ENCODE measurements at regions of chr4 and their contacts with region 1.

Region 1: GRCh38 chr4:26325191-26325590 is 4.4 kb downstream of the RBPJ start:
- DNase-seq: peak in 5 of 9 experiments; percentile 7 to 71 (median 22)
- ATAC-seq: peak; percentile 35
- H3K4me3 ChIP-seq: no peak overlapping the region
- H3K4me3 Mint-ChIP-seq: no peak overlapping the region
- H3K27ac ChIP-seq: no peak overlapping the region
- H3K27ac Mint-ChIP-seq: no peak overlapping the region
- H3K4me1 ChIP-seq: peaks cover 14% of the 10 kb centered on the region
- H3K4me1 Mint-ChIP-seq: peaks cover 52% of the 10 kb centered on the region
- H3K27me3 ChIP-seq: no peaks in the 10 kb centered on the region
- H3K27me3 Mint-ChIP-seq: no peaks in the 10 kb centered on the region
- CTCF ChIP-seq: peak; percentile 53

Region 2: DNA sequence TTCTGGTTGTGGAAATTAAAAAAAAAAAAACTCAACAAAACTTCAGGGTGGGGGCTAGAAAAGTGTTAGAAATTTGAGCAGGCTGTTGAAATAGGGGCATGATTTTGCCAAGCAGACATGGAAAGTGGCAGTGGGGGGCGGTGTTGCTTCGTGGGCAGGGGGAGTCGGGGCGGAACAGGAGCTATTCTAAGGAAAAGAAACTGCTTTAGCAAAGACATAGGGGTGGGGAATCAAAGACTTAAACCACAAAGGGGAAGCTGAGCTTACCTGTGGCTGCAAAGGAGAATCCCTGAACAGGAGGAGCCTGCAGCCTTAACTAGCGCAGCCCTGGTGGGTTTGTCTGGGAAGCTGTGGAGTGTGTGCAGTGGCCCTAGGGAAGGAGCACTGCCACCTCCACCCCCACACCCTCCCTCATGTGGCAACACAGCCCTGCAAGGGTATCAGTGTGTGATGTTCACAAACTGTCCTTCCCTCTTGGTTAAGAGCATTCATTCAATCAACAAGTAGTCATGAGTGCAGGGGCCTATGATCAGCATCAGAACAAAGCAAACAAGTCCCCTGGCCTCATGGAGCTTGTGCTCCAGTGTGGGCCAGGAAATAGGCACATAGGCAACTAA is 482.9 kb before region 1 on chr4:
- CTCF ChIA-PET with region 1: interaction called, 7 read pairs
- POLR2A ChIA-PET with region 1: no interaction called
- intact Hi-C with region 1: loop called (anchors 5 kb)
- DNase-seq: peak in 8 of 9 experiments; percentile 29 to 68 (median 60)
- ATAC-seq: peak; percentile 83
- H3K4me3 ChIP-seq: no peak overlapping the region
- H3K4me3 Mint-ChIP-seq: no peak overlapping the region
- H3K27ac ChIP-seq: no peak overlapping the region
- H3K27ac Mint-ChIP-seq: no peak overlapping the region
- H3K4me1 ChIP-seq: peaks cover 20% of the 10 kb centered on the region
- H3K4me1 Mint-ChIP-seq: peaks cover 54% of the 10 kb centered on the region
- H3K27me3 ChIP-seq: no peaks in the 10 kb centered on the region
- H3K27me3 Mint-ChIP-seq: no peaks in the 10 kb centered on the region
- CTCF ChIP-seq: peak; percentile 24

Region 3: GRCh38 chr4:25993395-25994185 is 331.6 kb before region 1 on chr4:
- CTCF ChIA-PET with region 1: interaction called, 13 read pairs
- POLR2A ChIA-PET with region 1: no interaction called
- intact Hi-C with region 1: loop called (anchors 1 to 5 kb)
- DNase-seq: peak in 2 of 9 experiments; percentile 8 to 20
- ATAC-seq: no peak
- H3K4me3 ChIP-seq: no peak overlapping the region
- H3K4me3 Mint-ChIP-seq: no peak overlapping the region
- H3K27ac ChIP-seq: no peak overlapping the region
- H3K27ac Mint-ChIP-seq: no peak overlapping the region
- H3K4me1 ChIP-seq: no peaks in the 10 kb centered on the region
- H3K4me1 Mint-ChIP-seq: peaks cover 3% of the 10 kb centered on the region
- H3K27me3 ChIP-seq: peaks cover 0 to 2% of the 10 kb centered on the region in 2 experiments
- H3K27me3 Mint-ChIP-seq: no peaks in the 10 kb centered on the region
- CTCF ChIP-seq: no peak

Region 4: DNA sequence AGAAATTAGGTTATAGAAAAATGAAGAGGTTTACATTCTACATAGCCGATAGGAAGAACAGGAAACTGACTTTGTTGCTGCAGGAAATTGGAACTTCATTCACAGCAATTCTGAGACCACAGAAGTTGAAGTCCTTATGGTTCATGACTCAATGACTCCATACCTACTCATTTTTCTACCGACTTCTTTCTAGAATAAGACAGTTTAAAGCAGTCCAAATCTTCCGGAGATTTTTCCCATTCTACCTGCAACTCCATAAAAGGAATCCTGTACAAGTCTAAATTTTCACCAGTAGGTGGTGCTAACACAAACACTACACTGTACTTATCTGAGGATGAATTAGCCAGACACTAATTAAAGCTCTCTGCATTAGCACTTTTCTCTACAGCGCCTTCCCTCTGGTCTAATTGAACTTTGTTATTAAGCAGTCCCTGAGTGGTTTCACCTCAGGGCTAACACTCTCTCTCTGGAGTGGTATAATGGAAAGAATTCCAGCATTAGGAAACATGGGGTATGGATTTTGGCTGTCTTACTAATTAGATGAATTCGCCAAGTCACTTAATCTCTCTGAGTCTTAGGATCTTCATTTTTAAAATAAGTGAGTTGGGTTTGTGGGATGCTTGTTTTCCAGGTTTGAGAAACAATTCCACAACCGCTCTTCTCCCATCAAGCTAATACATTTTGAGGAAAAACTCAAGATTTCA is 243.2 kb before region 1 on chr4:
- CTCF ChIA-PET with region 1: interaction called, 28 read pairs
- POLR2A ChIA-PET with region 1: no interaction called
- intact Hi-C with region 1: loop called (anchors 1 to 2 kb)
- DNase-seq: peak in 2 of 9 experiments; percentile 58 to 66
- ATAC-seq: no peak
- H3K4me3 ChIP-seq: no peak overlapping the region
- H3K4me3 Mint-ChIP-seq: no peak overlapping the region
- H3K27ac ChIP-seq: no peak overlapping the region
- H3K27ac Mint-ChIP-seq: no peak overlapping the region
- H3K4me1 ChIP-seq: no peaks in the 10 kb centered on the region
- H3K4me1 Mint-ChIP-seq: peaks cover 4% of the 10 kb centered on the region
- H3K27me3 ChIP-seq: no peaks in the 10 kb centered on the region
- H3K27me3 Mint-ChIP-seq: peaks cover 17% of the 10 kb centered on the region
- CTCF ChIP-seq: peak; percentile 53

Region 5: DNA sequence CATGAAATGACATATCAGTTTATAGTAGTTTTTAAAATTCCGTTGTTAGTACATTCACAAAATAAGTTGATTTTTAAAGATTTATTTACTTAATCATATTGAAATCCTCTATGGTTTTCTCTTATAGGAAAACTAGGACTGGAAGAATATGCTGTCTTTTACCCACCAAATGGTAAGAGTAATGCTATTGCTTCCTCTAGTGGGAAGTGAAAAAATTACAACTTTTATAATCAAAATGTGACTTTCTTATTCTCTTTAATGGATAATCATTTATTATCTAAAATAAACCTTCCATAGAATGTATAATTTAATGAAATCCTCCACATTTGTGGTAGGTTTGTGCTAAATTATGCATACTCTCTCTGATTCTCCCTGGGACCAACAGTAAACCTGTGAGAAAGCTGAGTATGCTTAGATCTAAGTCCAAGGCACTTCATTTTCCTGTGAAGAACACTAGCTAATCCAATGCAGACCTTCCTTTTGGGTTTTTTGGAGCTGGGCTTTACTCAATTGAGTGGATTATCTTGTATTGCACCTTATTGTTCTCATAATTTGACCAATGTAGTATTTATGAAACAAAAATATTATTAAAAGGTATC is 394.9 kb after region 1 on chr4:
- CTCF ChIA-PET with region 1: interaction called, 4 read pairs
- POLR2A ChIA-PET with region 1: no interaction called
- intact Hi-C with region 1: loop called in 1 of 2 experiments (anchors 5 kb)
- DNase-seq: peak in 2 of 9 experiments; percentile 11 to 21
- ATAC-seq: no peak
- H3K4me3 ChIP-seq: no peak overlapping the region
- H3K4me3 Mint-ChIP-seq: no peak overlapping the region
- H3K27ac ChIP-seq: no peak overlapping the region
- H3K27ac Mint-ChIP-seq: no peak overlapping the region
- H3K4me1 ChIP-seq: peaks cover 13% of the 10 kb centered on the region
- H3K4me1 Mint-ChIP-seq: peaks cover 24% of the 10 kb centered on the region
- H3K27me3 ChIP-seq: no peaks in the 10 kb centered on the region
- H3K27me3 Mint-ChIP-seq: no peaks in the 10 kb centered on the region
- CTCF ChIP-seq: peak; percentile 50

Region 6: GRCh38 chr4:27040356-27040755 is 715.2 kb after region 1 on chr4:
- CTCF ChIA-PET with region 1: no interaction called
- POLR2A ChIA-PET with region 1: no interaction called
- intact Hi-C with region 1: no loop called
- DNase-seq: no peak
- ATAC-seq: no peak
- H3K4me3 ChIP-seq: no peak overlapping the region
- H3K4me3 Mint-ChIP-seq: no peak overlapping the region
- H3K27ac ChIP-seq: no peak overlapping the region
- H3K27ac Mint-ChIP-seq: no peak overlapping the region
- H3K4me1 ChIP-seq: no peaks in the 10 kb centered on the region
- H3K4me1 Mint-ChIP-seq: peaks cover 6% of the 10 kb centered on the region
- H3K27me3 ChIP-seq: no peaks in the 10 kb centered on the region
- H3K27me3 Mint-ChIP-seq: peaks cover 18% of the 10 kb centered on the region
- CTCF ChIP-seq: no peak

Measured in CD8-positive, alpha-beta T cell (primary cell).